Endothelial cell of umbilical vein (primary cell): ENCODE measurements at regions of chr15 and their contacts with region 1.

Region 1: GRCh38 chr15:90886041-90886614 is 1.8 kb downstream of the FES start:
- DNase-seq: peak; percentile 72
- H3K4me3 ChIP-seq: peak overlapping the region in 1 of 3 experiments; percentile 46
- H3K27ac ChIP-seq: peak overlapping the region; percentile 4
- H3K4me1 ChIP-seq: peaks cover 24% of the 10 kb centered on the region
- H3K27me3 ChIP-seq: no peaks in the 10 kb centered on the region
- CTCF ChIP-seq: peak; percentile 96 to 98
- POLR2A ChIP-seq: no peak

Region 2: GRCh38 chr15:90497912-90498311 is 388.2 kb before region 1 on chr15:
- CTCF ChIA-PET with region 1: interaction called, 4 read pairs
- POLR2A ChIA-PET with region 1: no interaction called
- dilution Hi-C with region 1: no loop called
- intact Hi-C with region 1: loop called (anchors 5 kb)
- DNase-seq: no peak
- H3K4me3 ChIP-seq: no peak overlapping the region
- H3K27ac ChIP-seq: no peak overlapping the region
- H3K4me1 ChIP-seq: no peaks in the 10 kb centered on the region
- H3K27me3 ChIP-seq: no peaks in the 10 kb centered on the region
- CTCF ChIP-seq: no peak
- POLR2A ChIP-seq: no peak

Region 3: DNA sequence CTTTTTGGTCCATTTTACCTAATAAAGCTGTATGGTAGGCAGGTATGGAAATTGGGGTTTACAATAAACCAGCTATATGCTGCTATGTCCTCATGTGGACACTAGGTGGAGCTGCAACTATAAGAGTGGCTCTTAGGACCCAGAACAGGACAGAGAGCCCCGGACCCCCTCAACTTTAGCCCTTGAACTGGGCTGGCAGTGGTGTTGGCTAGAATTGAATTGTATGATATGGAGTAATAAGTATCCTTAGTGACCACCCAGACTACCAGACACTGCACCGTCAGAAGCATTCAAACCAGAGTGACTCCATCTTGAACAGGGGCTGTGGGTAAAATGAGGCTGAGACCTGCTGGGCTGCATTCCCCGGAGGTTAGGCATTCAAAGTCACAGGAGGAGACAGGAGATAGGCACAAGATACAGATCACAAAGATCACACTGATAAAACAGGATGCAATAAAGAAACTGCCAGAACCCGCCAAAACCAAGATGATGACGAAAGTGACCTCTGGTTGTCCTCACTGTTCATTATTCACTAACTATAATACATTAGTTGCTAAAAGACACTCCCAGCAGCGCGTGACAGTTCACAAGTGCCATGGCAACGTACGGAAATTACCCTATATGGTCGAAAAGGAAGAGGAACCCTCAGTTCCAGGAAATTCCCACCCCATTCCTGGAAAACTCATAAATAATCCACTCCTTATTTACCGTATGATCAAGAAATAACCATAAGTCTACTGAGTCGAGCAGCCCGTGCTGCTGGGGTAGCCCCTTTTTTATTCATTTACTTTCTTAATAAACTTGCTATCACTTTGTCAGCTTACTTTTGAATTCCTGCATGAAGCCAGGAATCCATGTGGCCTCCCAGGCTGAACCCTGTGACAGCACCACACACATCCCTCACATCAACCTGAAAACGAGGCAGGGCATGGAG is 237.7 kb before region 1 on chr15:
- CTCF ChIA-PET with region 1: interaction called, 237 read pairs
- POLR2A ChIA-PET with region 1: no interaction called
- dilution Hi-C with region 1: no loop called
- intact Hi-C with region 1: loop called (anchors 1 kb)
- DNase-seq: peak; percentile 88
- H3K4me3 ChIP-seq: no peak overlapping the region
- H3K27ac ChIP-seq: peak overlapping the region; percentile 97
- H3K4me1 ChIP-seq: peaks cover 30% of the 10 kb centered on the region
- H3K27me3 ChIP-seq: no peaks in the 10 kb centered on the region
- CTCF ChIP-seq: peak; percentile 70 to 82
- POLR2A ChIP-seq: peak; percentile 50

Region 4: GRCh38 chr15:90701880-90702630 is 184.1 kb before region 1 on chr15:
- CTCF ChIA-PET with region 1: interaction called, 10 read pairs
- POLR2A ChIA-PET with region 1: no interaction called
- dilution Hi-C with region 1: no loop called
- intact Hi-C with region 1: no loop called
- DNase-seq: no peak
- H3K4me3 ChIP-seq: no peak overlapping the region
- H3K27ac ChIP-seq: no peak overlapping the region
- H3K4me1 ChIP-seq: no peaks in the 10 kb centered on the region
- H3K27me3 ChIP-seq: no peaks in the 10 kb centered on the region
- CTCF ChIP-seq: no peak
- POLR2A ChIP-seq: no peak

Region 5: GRCh38 chr15:90869601-90870353 is 16.4 kb before region 1 on chr15:
- CTCF ChIA-PET with region 1: interaction called, 26 read pairs
- POLR2A ChIA-PET with region 1: interaction called, 5 read pairs
- dilution Hi-C with region 1: no loop called
- intact Hi-C with region 1: loop called (anchors 1 kb)
- DNase-seq: peak; percentile 95
- H3K4me3 ChIP-seq: peak overlapping the region in 1 of 3 experiments; percentile 59
- H3K27ac ChIP-seq: peak overlapping the region; percentile 89
- H3K4me1 ChIP-seq: peaks cover 42% of the 10 kb centered on the region
- H3K27me3 ChIP-seq: no peaks in the 10 kb centered on the region
- CTCF ChIP-seq: no peak
- POLR2A ChIP-seq: peak; percentile 80